ENCODE measurements at regions of chr1 and their contacts with region 1.

Region 1: DNA sequence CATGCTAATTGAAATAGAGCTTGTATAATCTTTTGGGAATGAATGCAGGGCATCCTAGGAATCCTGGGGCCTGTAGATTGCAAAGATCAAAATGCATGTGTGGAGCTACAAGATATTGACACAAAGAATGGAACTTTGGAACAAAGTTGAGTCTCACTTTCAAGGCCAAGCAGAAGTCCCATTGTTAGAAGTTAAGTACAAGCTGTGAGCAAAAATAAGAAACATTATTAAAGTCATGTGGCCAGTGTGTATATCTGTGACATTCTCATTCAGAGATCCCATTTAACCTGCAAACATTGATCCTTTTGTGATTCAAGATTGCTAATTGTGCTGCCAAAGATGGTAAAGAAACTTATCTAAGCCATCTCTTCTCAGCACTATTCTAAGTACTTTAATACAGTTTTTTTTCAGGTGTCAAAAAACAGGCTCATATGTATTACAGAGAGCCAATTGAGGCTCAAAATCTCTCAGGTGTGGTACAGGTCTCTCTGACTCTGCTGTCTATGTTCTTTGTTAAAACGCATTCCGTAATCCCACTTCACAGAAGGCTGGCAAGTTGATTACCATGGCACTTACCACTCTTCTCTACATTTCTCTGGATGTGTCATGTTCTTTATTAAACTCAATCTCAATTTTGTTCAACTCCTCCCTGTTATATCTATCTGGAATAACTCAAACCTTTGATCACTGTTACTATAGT is 704.4 kb upstream of the NEGR1 start:
- DNase-seq: no peak
- H3K4me3 ChIP-seq: no peak overlapping the region
- H3K27ac ChIP-seq: no peak overlapping the region
- H3K4me1 ChIP-seq: no peaks in the 10 kb centered on the region
- H3K27me3 ChIP-seq: no peaks in the 10 kb centered on the region
- CTCF ChIP-seq: no peak

Region 2: GRCh38 chr1:73205294-73205973 is 218.7 kb after region 1 on chr1:
- CTCF ChIA-PET with region 1: no interaction called
- POLR2A ChIA-PET with region 1: no interaction called
- intact Hi-C with region 1: loop called (anchors 10 kb)
- DNase-seq: peak; percentile 40
- H3K4me3 ChIP-seq: no peak overlapping the region
- H3K27ac ChIP-seq: no peak overlapping the region
- H3K4me1 ChIP-seq: no peaks in the 10 kb centered on the region
- H3K27me3 ChIP-seq: no peaks in the 10 kb centered on the region
- CTCF ChIP-seq: peak; percentile 55

Measured in A673 (cell line).